Pancreas (tissue), 10 donors: ENCODE measurements at regions of chr18 and their contacts with region 1.

Region 1: DNA sequence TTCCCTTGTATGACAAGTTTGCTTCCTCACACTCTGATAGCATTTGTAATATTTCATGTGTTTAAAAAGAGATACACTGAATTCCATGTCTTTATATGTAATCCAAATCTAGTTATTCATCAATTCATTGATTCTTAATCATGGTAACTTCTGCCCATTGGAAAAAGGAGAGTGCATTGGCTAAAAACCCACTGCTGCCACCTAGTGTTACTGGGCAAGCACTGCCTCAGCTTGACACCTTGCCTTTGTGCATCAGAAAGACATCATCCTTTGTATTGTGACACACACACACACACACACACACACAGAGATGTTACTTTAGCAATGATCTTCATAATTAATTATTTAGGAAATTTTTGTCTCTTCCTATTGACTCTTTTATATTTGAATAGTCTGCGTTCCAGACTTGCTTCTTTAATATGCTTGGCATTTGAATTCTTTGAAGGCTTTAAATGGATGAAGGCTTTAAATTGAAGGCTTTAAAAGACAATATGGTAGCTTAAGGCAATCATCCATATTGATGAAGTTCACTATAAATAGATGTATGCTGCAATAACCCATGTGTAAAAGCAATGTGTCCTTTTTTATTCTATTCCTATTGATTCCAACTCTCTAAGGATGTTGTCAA is 414.2 kb upstream of the CHST9 start:
- DNase-seq: peak in 3 of 6 donors; percentile 9 to 52 (median 34)
- ATAC-seq: peak; percentile 40 to 81 (median 76)
- H3K4me3 ChIP-seq: no peak overlapping the region
- H3K27ac ChIP-seq: no peak overlapping the region
- H3K4me1 ChIP-seq: no peaks in the 10 kb centered on the region
- H3K27me3 ChIP-seq: no peaks in the 10 kb centered on the region
- CTCF ChIP-seq: peak; percentile 41 to 83 (median 57)

Region 2: GRCh38 chr18:27363872-27364271 is 235.4 kb before region 1 on chr18:
- intact Hi-C with region 1: loop called in 1 of 3 experiments (anchors 10 kb)
- DNase-seq: no peak
- ATAC-seq: peak in 2 of 4 donors; percentile 41 to 55
- H3K4me3 ChIP-seq: no peak overlapping the region
- H3K27ac ChIP-seq: no peak overlapping the region
- H3K4me1 ChIP-seq: no peaks in the 10 kb centered on the region
- H3K27me3 ChIP-seq: no peaks in the 10 kb centered on the region
- CTCF ChIP-seq: peak in 1 of 4 donors; percentile 11